ENCODE measurements at regions of chr21 and their contacts with region 1.

Region 1: GRCh38 chr21:46635324-46636172 is at the start of gene PRMT2:
- DNase-seq: peak; percentile 94 to 99 (median 98)
- ATAC-seq: peak; percentile 84
- H3K4me3 ChIP-seq: peak within 1 kb of the TSS; percentile 100
- H3K4me3 Mint-ChIP-seq: peak within 1 kb of the TSS; percentile 100
- H3K27ac ChIP-seq: peak within 1 kb of the TSS; percentile 94 to 97
- H3K27ac Mint-ChIP-seq: peak within 1 kb of the TSS; percentile 97
- H3K4me1 ChIP-seq: peaks cover 38% of the 10 kb centered on the region
- H3K4me1 Mint-ChIP-seq: peaks cover 86% of the 10 kb centered on the region
- H3K27me3 ChIP-seq: no peaks in the 10 kb centered on the region
- H3K27me3 Mint-ChIP-seq: no peaks in the 10 kb centered on the region
- CTCF ChIP-seq: no peak
- total RNA-seq, gene PRMT2: 97.1 to 101 TPM

Region 2: DNA sequence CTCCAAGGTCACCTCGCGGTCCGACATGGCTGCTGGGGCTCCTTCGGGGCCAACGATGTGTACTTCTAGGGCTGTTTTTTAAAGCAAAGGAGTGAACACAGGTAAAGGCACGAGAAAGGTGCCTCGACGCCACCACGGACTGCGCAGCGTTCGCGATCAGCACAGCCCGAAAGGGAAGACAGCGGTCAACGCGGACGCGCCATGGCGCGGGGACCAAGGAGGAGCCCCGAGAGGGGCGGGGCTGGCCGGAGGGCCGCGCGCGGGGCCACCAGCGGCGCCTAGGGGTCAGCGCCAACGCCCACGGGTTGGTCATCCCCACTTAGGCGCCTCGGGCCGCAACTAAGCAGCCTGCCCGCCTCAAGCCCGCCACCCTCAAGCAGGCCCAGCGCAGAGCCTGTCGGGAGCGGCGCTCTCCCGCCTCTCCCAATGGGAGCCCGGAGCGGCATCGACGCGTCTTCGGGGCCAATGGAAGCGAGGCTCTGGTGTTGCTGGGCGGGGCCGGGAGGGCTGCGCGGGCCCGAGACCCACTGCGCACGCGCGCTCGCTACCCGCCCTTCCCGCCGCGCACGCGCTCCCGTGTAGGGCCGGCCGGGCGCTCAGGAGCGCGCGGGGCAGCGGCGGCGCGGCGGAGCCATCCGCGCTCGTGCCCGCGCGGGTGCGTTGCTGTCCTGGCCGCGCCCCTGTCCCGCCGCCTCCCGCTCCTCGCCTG is 177.1 kb before region 1 on chr21 and contains the start of gene DIP2A:
- CTCF ChIA-PET with region 1: interaction called, 4 read pairs
- POLR2A ChIA-PET with region 1: interaction called, 68 read pairs
- intact Hi-C with region 1: no loop called
- DNase-seq: peak; percentile 85 to 99 (median 93)
- ATAC-seq: peak; percentile 97
- H3K4me3 ChIP-seq: peak within 1 kb of the TSS; percentile 89
- H3K4me3 Mint-ChIP-seq: peak within 1 kb of the TSS; percentile 94
- H3K27ac ChIP-seq: peak within 1 kb of the TSS; percentile 78 to 86
- H3K27ac Mint-ChIP-seq: peak within 1 kb of the TSS; percentile 93
- H3K4me1 ChIP-seq: peaks cover 35% of the 10 kb centered on the region
- H3K4me1 Mint-ChIP-seq: peaks cover 63% of the 10 kb centered on the region
- H3K27me3 ChIP-seq: no peaks in the 10 kb centered on the region
- H3K27me3 Mint-ChIP-seq: no peaks in the 10 kb centered on the region
- CTCF ChIP-seq: no peak
- total RNA-seq, gene DIP2A: 61.2 to 66.1 TPM

Region 3: GRCh38 chr21:46532080-46532479 is 103.5 kb before region 1 on chr21:
- CTCF ChIA-PET with region 1: interaction called, 5 read pairs
- POLR2A ChIA-PET with region 1: interaction called, 31 read pairs
- intact Hi-C with region 1: loop called in 1 of 2 experiments (anchors 1 kb)
- DNase-seq: peak in 10 of 14 experiments; percentile 9 to 62 (median 34)
- ATAC-seq: peak; percentile 86
- H3K4me3 ChIP-seq: no peak overlapping the region
- H3K4me3 Mint-ChIP-seq: peak overlapping the region; percentile 67
- H3K27ac ChIP-seq: no peak overlapping the region
- H3K27ac Mint-ChIP-seq: peak overlapping the region; percentile 81
- H3K4me1 ChIP-seq: peaks cover 5% of the 10 kb centered on the region
- H3K4me1 Mint-ChIP-seq: peaks cover 54% of the 10 kb centered on the region
- H3K27me3 ChIP-seq: no peaks in the 10 kb centered on the region
- H3K27me3 Mint-ChIP-seq: no peaks in the 10 kb centered on the region
- CTCF ChIP-seq: peak; percentile 29

Region 4: DNA sequence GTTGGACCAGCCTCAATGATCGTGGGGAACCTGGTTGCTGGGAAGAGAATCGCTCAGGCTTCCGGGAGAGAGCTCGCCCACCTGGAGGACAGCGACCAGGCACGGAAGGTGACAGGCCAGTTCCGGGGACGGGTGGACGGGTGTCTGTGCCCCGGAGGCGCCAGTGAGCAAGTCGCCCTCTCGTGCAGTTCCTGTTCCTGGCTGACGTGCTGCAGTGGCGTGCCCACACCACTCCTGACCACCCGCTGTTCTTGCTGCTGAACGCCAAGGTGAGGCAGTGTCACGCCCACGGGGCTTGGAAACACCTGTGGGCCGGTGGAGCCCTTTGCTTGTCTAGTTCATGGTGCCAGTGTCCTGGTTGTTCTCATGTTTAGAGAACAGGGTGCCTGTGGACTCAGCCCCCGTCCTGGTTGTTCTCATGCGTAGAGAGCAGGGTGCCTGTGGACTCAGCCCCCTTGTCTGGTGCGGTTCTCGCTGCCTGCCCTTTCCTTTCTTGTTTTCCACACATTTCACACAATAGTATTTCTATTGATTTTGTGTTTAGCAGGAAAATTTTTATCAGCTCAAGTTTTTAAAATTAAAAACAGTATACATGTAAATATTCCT is 83.8 kb before region 1 on chr21:
- CTCF ChIA-PET with region 1: interaction called, 12 read pairs
- POLR2A ChIA-PET with region 1: interaction called, 130 read pairs
- intact Hi-C with region 1: loop called in 1 of 2 experiments (anchors 1 kb)
- DNase-seq: peak in 11 of 14 experiments; percentile 13 to 76 (median 29)
- ATAC-seq: no peak
- H3K4me3 ChIP-seq: peak overlapping the region; percentile 15
- H3K4me3 Mint-ChIP-seq: peak overlapping the region; percentile 74
- H3K27ac ChIP-seq: peak overlapping the region; percentile 76 to 87
- H3K27ac Mint-ChIP-seq: peak overlapping the region; percentile 98
- H3K4me1 ChIP-seq: peaks cover 64% of the 10 kb centered on the region
- H3K4me1 Mint-ChIP-seq: peaks cover 77% of the 10 kb centered on the region
- H3K27me3 ChIP-seq: no peaks in the 10 kb centered on the region
- H3K27me3 Mint-ChIP-seq: no peaks in the 10 kb centered on the region
- CTCF ChIP-seq: no peak

Region 5: GRCh38 chr21:46572850-46573249 is 62.7 kb before region 1 on chr21:
- CTCF ChIA-PET with region 1: no interaction called
- POLR2A ChIA-PET with region 1: interaction called, 15 read pairs
- intact Hi-C with region 1: no loop called
- DNase-seq: no peak
- ATAC-seq: no peak
- H3K4me3 ChIP-seq: no peak overlapping the region
- H3K4me3 Mint-ChIP-seq: no peak overlapping the region
- H3K27ac ChIP-seq: no peak overlapping the region
- H3K27ac Mint-ChIP-seq: peak overlapping the region; percentile 25
- H3K4me1 ChIP-seq: no peaks in the 10 kb centered on the region
- H3K4me1 Mint-ChIP-seq: peaks cover 46% of the 10 kb centered on the region
- H3K27me3 ChIP-seq: no peaks in the 10 kb centered on the region
- H3K27me3 Mint-ChIP-seq: no peaks in the 10 kb centered on the region
- CTCF ChIP-seq: no peak

Region 6: DNA sequence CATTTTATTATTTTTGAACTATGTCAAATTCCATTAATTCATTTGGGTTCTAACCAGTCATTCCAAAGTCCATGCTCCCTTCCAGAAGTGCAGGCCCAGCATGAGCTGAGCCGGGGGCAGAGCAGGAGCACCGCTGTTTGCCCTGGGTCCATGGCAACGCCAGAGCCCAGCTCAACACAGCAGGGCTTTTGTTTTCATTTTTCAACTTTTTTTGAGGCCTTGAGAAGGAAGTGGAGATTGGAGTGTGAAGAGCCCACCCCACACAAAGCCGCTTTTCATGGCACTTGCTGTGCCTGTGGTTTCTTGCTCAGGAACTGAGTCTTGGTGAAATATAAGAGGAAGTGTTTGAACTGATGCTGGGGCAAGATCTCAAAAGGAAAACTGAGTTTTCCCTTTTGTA is 13.3 kb before region 1 on chr21:
- CTCF ChIA-PET with region 1: interaction called, 3 read pairs
- POLR2A ChIA-PET with region 1: interaction called, 90 read pairs
- intact Hi-C with region 1: loop called in 1 of 2 experiments (anchors 1 kb)
- DNase-seq: peak in 9 of 14 experiments; percentile 20 to 90 (median 56)
- ATAC-seq: peak; percentile 70
- H3K4me3 ChIP-seq: no peak overlapping the region
- H3K4me3 Mint-ChIP-seq: peak overlapping the region; percentile 78
- H3K27ac ChIP-seq: peak overlapping the region; percentile 63 to 69
- H3K27ac Mint-ChIP-seq: peak overlapping the region; percentile 94
- H3K4me1 ChIP-seq: peaks cover 69% of the 10 kb centered on the region
- H3K4me1 Mint-ChIP-seq: peaks cover 74% of the 10 kb centered on the region
- H3K27me3 ChIP-seq: no peaks in the 10 kb centered on the region
- H3K27me3 Mint-ChIP-seq: no peaks in the 10 kb centered on the region
- CTCF ChIP-seq: no peak

Measured in CD4-positive, alpha-beta T cell (primary cell).